Activated T-helper 2 cell treated with anti-CD3 and anti-CD28 coated beads, Interferon-gamma antibody, Interleukin-2, Interleukin-4, amounts not matched to agents 10 μg/mL and 5 μg/mL and 100 μg/mL, durations not matched to agents 14 hours and 24 hours and 36 hours (primary cell): ENCODE measurements at regions of chr17 and their contacts with region 1.

Region 1: DNA sequence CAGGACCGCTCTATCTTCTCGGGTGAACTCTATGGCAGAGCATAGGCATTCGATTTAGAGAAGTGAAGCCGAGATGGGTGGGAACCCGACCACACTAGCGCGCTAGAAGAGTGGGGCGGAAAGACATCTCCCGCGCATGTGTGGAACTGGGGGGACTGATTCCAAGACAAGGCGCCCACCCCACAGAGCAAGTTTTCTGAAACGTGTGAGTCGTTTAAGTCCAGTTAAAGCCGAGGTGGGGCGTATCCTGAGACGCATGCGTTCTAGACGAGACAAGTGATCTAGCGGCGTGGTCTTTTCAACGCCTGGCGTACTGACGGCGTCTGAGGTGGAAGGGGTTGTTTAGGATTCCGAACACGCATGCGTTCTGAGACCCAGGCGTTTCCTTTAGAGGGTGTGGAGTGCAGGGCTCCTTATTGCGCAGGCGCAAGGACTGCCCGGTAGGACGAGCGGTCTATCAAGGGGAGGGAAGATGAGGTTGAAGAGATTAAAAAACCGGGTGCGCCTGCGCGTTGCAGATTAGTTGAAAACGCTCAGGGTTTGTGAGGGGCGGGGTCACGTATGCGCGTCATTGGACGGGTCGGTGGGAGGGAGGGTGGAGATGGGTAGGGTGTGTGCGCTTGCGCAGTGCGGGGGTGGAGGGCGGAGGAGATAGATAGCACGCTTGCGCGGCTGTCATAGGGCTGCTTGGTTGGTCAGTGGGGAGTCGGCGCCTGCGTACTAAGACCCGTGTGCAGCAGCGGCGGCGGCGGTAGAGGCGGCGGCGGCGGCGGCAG is at the start of gene EIF5A:
- DNase-seq: peak; percentile 99
- H3K4me3 Mint-ChIP-seq: peak within 1 kb of the TSS; percentile 94
- H3K27ac Mint-ChIP-seq: peak within 1 kb of the TSS; percentile 97
- H3K4me1 Mint-ChIP-seq: peaks cover 32% of the 10 kb centered on the region
- H3K27me3 Mint-ChIP-seq: peaks cover under 1% of the 10 kb centered on the region
- total RNA-seq, gene EIF5A: 1,189 and 1,199 TPM in 2 replicates

Region 2: DNA sequence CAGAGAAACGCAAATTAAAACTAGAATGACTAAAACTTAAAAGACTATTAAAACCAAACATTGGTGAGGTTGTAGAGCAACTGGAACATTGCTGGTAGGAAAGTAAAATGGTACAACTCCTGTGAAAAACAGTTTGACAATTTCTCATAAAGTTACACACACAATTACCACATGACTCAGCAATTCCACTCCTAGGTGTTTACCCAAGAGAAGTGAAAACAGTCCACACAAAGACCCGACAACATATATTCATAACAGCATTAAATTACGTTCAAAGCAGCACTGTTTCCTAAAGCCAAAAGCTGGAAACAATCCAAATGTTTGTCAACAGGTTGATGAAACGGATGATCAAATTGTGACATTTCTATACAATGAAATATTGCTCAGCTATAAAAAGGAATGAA is 337.8 kb before region 1 on chr17:
- intact Hi-C with region 1: no loop called
- DNase-seq: no peak
- H3K4me3 Mint-ChIP-seq: no peak overlapping the region
- H3K27ac Mint-ChIP-seq: no peak overlapping the region
- H3K4me1 Mint-ChIP-seq: no peaks in the 10 kb centered on the region
- H3K27me3 Mint-ChIP-seq: no peaks in the 10 kb centered on the region

Region 3: GRCh38 chr17:7214300-7215135 is 92.6 kb before region 1 on chr17:
- intact Hi-C with region 1: loop called (anchors 2 kb)
- DNase-seq: peak; percentile 99
- H3K4me3 Mint-ChIP-seq: peak overlapping the region; percentile 85
- H3K27ac Mint-ChIP-seq: peak overlapping the region; percentile 93
- H3K4me1 Mint-ChIP-seq: peaks cover 48% of the 10 kb centered on the region
- H3K27me3 Mint-ChIP-seq: peaks cover 15% of the 10 kb centered on the region

Region 4: DNA sequence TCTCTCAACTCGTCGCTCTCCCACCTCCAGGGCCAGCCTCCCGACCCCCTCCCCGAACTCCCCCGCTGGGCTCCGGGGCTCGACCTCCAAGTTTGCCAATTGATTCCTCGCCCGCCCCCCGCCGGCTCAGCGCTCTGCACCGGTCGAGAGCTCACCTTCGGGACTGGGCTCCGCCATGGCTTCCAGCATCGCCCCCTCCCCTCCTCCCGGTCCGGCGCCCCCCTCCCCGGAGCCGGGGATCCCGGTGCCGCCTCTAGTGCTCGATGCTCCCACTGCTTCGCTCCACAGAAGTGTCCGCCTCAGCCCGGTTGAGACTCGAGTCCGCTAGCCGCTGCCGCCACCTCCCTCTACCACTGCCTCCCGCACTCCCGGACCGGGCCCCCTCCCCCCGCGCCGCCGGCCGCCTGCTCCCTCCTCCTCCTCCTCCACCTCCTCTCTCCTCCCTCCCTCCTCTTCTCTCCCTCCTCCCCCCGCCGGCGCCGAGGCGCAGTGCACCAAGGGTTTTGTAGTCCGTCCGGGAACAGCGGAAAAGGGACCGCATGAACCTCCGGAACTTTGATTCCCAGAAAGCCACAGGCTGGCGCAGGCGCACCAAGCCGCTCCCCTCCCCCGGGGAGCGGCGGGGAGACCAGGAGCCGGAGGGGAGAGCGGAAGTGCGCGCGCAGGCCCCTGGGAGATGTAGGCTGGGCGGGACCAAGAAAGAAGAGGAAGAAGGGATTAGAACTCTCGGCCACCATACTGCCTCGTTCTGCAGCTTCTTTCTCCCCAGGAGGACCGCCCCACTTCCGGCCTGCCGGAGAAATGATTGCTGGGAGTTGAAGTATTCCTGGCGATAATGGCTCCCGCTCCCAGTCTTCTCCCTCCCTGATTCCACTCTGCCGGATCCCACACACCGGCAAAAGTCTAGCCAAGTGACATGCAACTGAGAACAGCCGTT is 67.7 kb before region 1 on chr17 and contains the start of gene PHF23:
- intact Hi-C with region 1: loop called (anchors 2 kb)
- DNase-seq: peak; percentile 98
- H3K4me3 Mint-ChIP-seq: peak within 1 kb of the TSS; percentile 98
- H3K27ac Mint-ChIP-seq: peak within 1 kb of the TSS; percentile 92
- H3K4me1 Mint-ChIP-seq: peaks cover 48% of the 10 kb centered on the region
- H3K27me3 Mint-ChIP-seq: no peaks in the 10 kb centered on the region
- total RNA-seq, gene PHF23: 43.4 and 47.8 TPM in 2 replicates

Region 5: DNA sequence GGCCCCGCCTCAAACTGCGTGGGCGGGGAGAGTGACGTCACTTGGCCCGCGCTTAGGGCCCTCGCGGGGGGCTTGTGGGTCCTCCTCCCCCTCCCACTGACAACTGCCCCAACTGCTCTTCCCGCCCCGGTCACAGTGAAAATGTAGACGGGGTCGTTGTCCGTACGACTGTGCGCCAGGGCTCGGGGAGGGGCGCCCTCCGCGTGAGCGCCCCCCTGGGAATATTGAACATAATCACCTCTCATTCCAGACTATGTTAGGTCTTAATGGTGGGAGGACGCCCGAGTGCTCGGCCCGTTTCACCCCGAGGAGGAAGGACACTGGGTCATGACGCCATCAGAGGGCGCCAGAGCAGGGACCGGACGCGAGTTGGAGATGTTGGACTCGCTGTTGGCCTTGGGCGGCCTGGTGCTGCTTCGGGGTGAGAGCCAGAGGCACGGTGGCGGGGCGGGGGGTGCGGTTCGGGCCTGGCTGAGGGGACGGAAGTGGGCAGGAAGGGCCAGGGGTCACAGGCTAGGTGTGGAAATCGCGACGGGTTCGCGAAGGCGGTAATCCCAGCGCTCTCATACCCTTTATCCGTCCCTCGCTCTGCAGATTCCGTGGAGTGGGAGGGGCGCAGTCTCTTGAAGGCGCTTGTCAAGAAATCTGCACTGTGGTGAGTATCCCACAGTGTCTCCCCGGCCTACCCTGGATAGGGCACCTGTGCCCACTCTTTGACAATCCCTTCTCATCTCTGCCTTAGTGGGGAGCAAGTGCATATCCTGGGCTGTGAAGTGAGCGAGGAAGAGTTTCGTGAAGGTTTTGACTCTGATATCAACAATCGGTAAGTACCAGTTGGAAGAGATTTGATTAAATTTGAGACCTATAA is 54.7 kb before region 1 on chr17 and contains the start of gene ELP5:
- intact Hi-C with region 1: loop called (anchors 1 kb)
- DNase-seq: peak; percentile 88
- H3K4me3 Mint-ChIP-seq: peak within 1 kb of the TSS; percentile 92
- H3K27ac Mint-ChIP-seq: peak within 1 kb of the TSS; percentile 98
- H3K4me1 Mint-ChIP-seq: peaks cover 33% of the 10 kb centered on the region
- H3K27me3 Mint-ChIP-seq: no peaks in the 10 kb centered on the region
- total RNA-seq, gene ELP5: 64.8 and 65.3 TPM in 2 replicates

Region 6: GRCh38 chr17:7263083-7264078 is 43.7 kb before region 1 on chr17:
- intact Hi-C with region 1: no loop called
- DNase-seq: no peak
- H3K4me3 Mint-ChIP-seq: peak overlapping the region; percentile 47
- H3K27ac Mint-ChIP-seq: no peak overlapping the region
- H3K4me1 Mint-ChIP-seq: peaks cover 16% of the 10 kb centered on the region
- H3K27me3 Mint-ChIP-seq: peaks cover 29% of the 10 kb centered on the region

Region 7: GRCh38 chr17:7296189-7296902 is 10.8 kb before region 1 on chr17:
- intact Hi-C with region 1: loop called (anchors 1 kb)
- DNase-seq: peak; percentile 64
- H3K4me3 Mint-ChIP-seq: no peak overlapping the region
- H3K27ac Mint-ChIP-seq: no peak overlapping the region
- H3K4me1 Mint-ChIP-seq: peaks cover 13% of the 10 kb centered on the region
- H3K27me3 Mint-ChIP-seq: peaks cover 36% of the 10 kb centered on the region

Region 8: DNA sequence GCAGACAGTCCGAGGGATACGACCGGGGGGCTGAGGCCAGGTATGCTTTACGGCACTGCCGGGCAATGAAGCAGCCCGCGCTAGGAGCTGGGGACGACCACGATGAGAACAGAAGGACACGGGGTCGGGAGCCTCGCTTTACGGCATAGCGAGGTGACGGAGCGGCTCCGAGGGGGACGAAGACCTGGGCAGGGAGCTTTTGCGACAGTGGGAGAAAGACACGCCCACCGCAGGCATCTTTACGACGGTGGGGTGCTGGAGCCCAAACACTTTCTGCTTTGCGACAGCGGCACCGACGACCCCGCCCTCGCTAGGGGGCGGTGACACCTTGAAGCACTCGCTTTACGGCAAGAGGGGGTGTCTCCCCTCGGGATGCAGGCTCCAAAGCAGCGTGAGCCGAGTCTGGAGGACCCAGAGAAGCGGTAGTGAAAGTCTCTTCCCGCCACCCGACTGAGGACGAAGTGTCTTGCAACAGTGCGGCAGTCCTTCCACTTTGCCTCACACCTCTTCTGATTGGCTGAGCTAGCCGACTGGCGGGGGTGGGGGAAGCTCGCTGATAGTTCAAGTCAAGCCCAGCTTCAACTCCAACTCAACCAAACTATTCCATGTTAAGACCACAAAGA is 22.4 kb after region 1 on chr17:
- intact Hi-C with region 1: loop called (anchors 1 kb)
- DNase-seq: peak; percentile 96
- H3K4me3 Mint-ChIP-seq: peak overlapping the region; percentile 87
- H3K27ac Mint-ChIP-seq: peak overlapping the region; percentile 95
- H3K4me1 Mint-ChIP-seq: peaks cover 26% of the 10 kb centered on the region
- H3K27me3 Mint-ChIP-seq: no peaks in the 10 kb centered on the region

Region 9: DNA sequence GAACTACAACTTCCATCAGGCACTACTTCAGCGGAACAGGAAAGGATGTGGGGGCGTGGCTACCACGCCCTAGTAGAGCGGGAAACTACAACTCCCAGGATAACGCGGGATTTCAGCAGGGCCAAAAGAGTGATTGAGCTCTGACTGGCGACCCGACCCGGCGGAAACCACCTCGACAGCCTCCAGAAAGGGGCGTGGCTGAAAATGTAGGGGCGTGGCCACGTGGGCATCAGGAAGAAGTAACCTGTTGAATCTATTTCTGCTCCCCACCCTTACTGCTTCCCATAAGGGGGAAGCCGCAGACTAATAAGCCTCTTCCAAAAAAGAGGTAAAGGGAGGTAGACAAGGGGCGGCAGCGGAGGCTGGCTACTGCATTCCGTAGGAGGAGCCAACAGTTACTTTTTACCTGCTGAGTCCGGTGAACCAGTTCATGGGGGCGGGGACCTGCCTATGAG is 128.1 kb after region 1 on chr17 and contains the start of gene TMEM102:
- intact Hi-C with region 1: loop called (anchors 5 kb)
- DNase-seq: peak; percentile 98
- H3K4me3 Mint-ChIP-seq: peak within 1 kb of the TSS; percentile 85
- H3K27ac Mint-ChIP-seq: peak within 1 kb of the TSS; percentile 95
- H3K4me1 Mint-ChIP-seq: peaks cover 28% of the 10 kb centered on the region
- H3K27me3 Mint-ChIP-seq: peaks cover 10% of the 10 kb centered on the region
- total RNA-seq, gene TMEM102: 13.4 and 14.8 TPM in 2 replicates

Region 10: DNA sequence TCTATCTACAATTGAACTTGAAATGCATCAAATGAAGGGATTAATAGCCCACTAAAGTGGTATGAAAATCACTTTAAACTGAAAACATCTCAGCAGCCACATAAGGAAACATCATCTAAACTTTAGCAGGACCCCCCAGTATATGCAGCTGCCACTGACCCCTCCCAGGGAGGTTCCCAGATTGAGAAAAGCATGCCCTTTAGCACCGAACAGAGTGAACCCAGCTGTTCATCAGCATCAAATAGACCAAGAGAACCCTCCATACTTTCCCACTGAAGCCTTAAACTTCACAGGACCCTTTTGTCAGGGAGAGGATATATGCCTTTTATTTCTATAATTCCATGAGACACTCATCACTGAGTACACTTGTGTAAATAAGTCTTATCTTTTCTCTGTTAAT is 1278.8 kb after region 1 on chr17:
- intact Hi-C with region 1: no loop called
- DNase-seq: no peak
- H3K4me3 Mint-ChIP-seq: no peak overlapping the region
- H3K27ac Mint-ChIP-seq: no peak overlapping the region
- H3K4me1 Mint-ChIP-seq: peaks cover 4% of the 10 kb centered on the region
- H3K27me3 Mint-ChIP-seq: peaks cover 15% of the 10 kb centered on the region